GM12878 (cell line): ENCODE measurements at regions of chr14 and their contacts with region 1.

Region 1: GRCh38 chr14:33792720-33793368 is 158.0 kb downstream of the EGLN3 start:
- DNase-seq: peak; percentile 15
- ATAC-seq: peak; percentile 91
- H3K4me3 ChIP-seq: no peak overlapping the region
- H3K27ac ChIP-seq: no peak overlapping the region
- H3K4me1 ChIP-seq: no peaks in the 10 kb centered on the region
- H3K27me3 ChIP-seq: no peaks in the 10 kb centered on the region
- CTCF ChIP-seq: peak; percentile 91 to 95 (median 93); a peak in 5 of 6 replicates
- EP300 ChIP-seq: no peak
- POLR2A ChIP-seq: no peak
- RAD21 ChIP-seq: peak; percentile 86

Region 2: DNA sequence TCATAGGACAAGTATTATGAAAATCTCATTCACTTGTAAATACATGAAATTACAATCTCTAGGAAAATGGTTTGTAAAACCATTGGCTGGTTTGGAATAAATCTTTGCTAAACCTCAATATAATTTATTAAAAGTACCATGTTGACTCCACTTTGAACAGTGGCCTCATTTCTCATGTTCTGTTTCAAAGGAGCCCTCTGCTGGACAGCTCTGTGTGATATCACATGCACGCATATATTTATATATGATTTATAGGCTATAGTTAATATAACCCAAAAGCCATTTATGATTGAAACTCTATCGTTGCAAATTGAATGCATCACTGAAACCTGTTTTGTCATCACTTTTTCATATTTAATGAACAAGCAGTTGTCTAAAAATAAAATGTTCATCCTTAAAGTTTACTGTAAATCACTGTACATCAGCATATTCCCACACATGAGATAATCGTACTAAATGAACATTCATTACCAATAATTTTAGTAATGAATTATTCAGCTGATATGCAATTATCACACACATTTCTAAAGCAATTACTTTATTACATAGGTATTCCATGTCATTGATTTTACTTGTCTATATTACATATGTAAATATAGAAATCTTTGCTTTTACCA is 360.3 kb before region 1 on chr14:
- CTCF ChIA-PET with region 1: interaction called, 8 read pairs
- POLR2A ChIA-PET with region 1: no interaction called
- RAD21 ChIA-PET with region 1: no interaction called
- SMC1A ChIA-PET with region 1: interaction called, 15 read pairs
- in situ Hi-C with region 1: no loop called
- intact Hi-C with region 1: no loop called
- DNase-seq: no peak
- ATAC-seq: no peak
- H3K4me3 ChIP-seq: no peak overlapping the region
- H3K27ac ChIP-seq: no peak overlapping the region
- H3K4me1 ChIP-seq: no peaks in the 10 kb centered on the region
- H3K27me3 ChIP-seq: no peaks in the 10 kb centered on the region
- CTCF ChIP-seq: peak; percentile 26 to 46 (median 27); a peak in 4 of 6 replicates
- EP300 ChIP-seq: no peak
- POLR2A ChIP-seq: no peak
- RAD21 ChIP-seq: peak; percentile 54

Region 3: GRCh38 chr14:33499687-33500086 is 293.2 kb before region 1 on chr14:
- CTCF ChIA-PET with region 1: interaction called, 12 read pairs
- POLR2A ChIA-PET with region 1: no interaction called
- RAD21 ChIA-PET with region 1: no interaction called
- SMC1A ChIA-PET with region 1: interaction called, 10 read pairs
- in situ Hi-C with region 1: no loop called
- intact Hi-C with region 1: no loop called
- DNase-seq: no peak
- ATAC-seq: no peak
- H3K4me3 ChIP-seq: no peak overlapping the region
- H3K27ac ChIP-seq: no peak overlapping the region
- H3K4me1 ChIP-seq: no peaks in the 10 kb centered on the region
- H3K27me3 ChIP-seq: no peaks in the 10 kb centered on the region; a peak in 1 of 4 replicates
- CTCF ChIP-seq: no peak
- EP300 ChIP-seq: no peak
- POLR2A ChIP-seq: no peak
- RAD21 ChIP-seq: no peak

Region 4: DNA sequence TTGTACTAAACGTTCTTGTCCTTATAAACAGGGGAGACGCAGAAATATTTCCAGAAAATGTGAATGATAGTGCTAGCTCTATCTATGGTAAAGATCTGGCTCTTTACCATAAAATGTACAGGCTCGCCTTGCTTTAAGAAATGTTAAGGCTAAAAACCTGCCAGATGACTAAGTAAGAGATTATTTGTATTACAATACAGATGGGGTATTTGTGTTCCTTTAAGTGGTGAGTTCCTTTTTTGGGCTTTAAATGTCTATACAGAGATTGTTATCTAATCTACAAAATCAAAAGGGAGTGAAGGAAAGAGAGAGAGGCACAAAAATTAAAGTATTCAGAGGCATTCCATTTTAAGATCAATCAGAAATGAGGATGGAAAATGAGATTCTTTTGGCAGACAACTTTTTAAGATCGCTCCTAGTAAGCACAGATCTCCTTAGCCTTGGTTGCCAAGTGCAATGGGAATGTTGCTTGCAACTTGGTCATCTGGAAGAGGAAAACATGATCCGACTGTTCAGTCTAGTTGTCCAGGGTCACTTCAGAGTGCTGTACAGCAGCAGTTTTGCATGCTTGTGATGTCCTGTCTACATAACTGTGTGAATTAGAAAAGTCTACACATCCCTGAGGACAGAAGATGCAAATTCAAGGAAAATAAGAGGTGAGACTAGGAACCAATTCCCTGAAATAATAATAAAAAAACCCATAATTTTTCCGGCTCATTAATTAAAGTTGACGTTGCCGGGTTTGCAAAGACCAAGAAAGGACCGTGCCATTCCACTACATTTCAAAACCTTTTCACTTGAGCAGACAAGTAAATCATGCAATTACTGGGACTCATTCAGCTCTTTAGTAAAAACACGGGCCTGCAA is 222.8 kb before region 1 on chr14:
- CTCF ChIA-PET with region 1: interaction called, 7 read pairs
- POLR2A ChIA-PET with region 1: no interaction called
- RAD21 ChIA-PET with region 1: interaction called, 29 read pairs
- SMC1A ChIA-PET with region 1: interaction called, 26 read pairs
- in situ Hi-C with region 1: no loop called
- intact Hi-C with region 1: no loop called
- DNase-seq: no peak
- ATAC-seq: no peak
- H3K4me3 ChIP-seq: no peak overlapping the region
- H3K27ac ChIP-seq: no peak overlapping the region
- H3K4me1 ChIP-seq: no peaks in the 10 kb centered on the region
- H3K27me3 ChIP-seq: no peaks in the 10 kb centered on the region
- CTCF ChIP-seq: no peak
- EP300 ChIP-seq: no peak
- POLR2A ChIP-seq: no peak
- RAD21 ChIP-seq: no peak

Region 5: DNA sequence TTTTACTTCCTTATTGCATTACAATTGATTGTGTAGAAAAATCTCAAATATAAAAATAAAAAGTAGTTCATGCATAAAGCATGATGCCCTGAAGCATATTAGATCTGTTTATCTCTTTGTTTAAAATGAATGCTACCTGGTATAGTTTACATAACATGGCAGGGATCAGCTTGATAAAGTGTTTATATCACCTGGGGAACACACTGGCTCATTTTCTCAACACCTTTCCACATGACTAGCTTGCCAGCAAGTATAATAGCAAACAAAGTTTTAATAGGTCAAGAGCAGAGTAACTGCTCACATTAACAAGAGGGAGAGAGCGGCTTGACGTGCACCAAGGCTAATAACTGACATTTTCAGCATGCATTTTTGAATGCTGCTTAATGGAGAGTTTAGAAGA is 88.4 kb before region 1 on chr14:
- CTCF ChIA-PET with region 1: interaction called, 9 read pairs
- POLR2A ChIA-PET with region 1: interaction called, 3 read pairs
- RAD21 ChIA-PET with region 1: interaction called, 4 read pairs
- SMC1A ChIA-PET with region 1: interaction called, 10 read pairs
- in situ Hi-C with region 1: no loop called
- intact Hi-C with region 1: no loop called
- DNase-seq: no peak
- ATAC-seq: peak; percentile 43; the same call in 1 of the 3 replicates
- H3K4me3 ChIP-seq: no peak overlapping the region
- H3K27ac ChIP-seq: no peak overlapping the region
- H3K4me1 ChIP-seq: no peaks in the 10 kb centered on the region
- H3K27me3 ChIP-seq: no peaks in the 10 kb centered on the region
- CTCF ChIP-seq: no peak
- EP300 ChIP-seq: no peak
- POLR2A ChIP-seq: no peak
- RAD21 ChIP-seq: no peak

Region 6: DNA sequence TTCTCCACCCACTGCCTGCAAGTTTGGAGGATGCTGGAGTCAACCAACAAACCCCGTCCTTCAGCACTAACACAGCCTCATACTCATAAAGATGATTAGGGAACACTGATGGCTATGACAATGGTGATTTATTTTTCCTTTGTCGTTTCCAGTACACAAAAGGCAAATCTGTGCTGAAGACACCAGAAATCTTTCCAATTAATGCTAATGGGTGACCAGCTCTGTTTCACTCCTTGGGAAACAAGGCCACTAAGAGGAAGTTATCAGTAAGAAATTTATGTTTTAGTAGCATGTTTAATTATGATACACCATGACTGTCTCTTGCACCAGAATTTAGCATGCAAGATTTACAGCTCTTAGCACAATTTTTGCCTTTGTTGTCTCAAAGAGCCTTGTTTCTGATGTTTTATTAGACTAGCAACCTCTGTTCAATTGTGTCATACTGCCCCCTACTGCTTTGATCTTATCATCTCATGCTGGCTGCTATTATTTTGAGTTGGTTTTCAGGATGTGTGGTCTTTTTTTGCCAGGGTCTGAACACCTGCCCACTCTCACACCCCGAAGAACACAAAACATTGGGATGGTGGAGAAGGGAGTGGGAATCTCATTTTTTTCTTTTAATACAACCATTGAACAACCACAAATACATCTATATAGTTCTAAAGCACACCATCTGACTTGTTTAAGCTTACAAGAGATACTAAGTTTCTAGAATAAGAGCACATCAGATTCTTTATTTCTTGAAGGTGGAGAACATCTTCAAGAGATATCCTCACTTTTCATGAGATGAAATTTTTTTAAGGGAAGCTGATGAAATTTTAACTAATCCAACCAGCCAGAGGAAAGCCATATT is 508.3 kb after region 1 on chr14:
- CTCF ChIA-PET with region 1: interaction called, 12 read pairs
- POLR2A ChIA-PET with region 1: no interaction called
- RAD21 ChIA-PET with region 1: interaction called, 7 read pairs
- SMC1A ChIA-PET with region 1: interaction called, 4 read pairs
- in situ Hi-C with region 1: no loop called
- intact Hi-C with region 1: no loop called
- DNase-seq: peak; percentile 7
- ATAC-seq: peak; percentile 67
- H3K4me3 ChIP-seq: no peak overlapping the region
- H3K27ac ChIP-seq: no peak overlapping the region
- H3K4me1 ChIP-seq: no peaks in the 10 kb centered on the region
- H3K27me3 ChIP-seq: no peaks in the 10 kb centered on the region
- CTCF ChIP-seq: peak; percentile 51 to 59 (median 56); a peak in 5 of 6 replicates
- EP300 ChIP-seq: no peak
- POLR2A ChIP-seq: no peak
- RAD21 ChIP-seq: peak; percentile 62